Activated CD4-positive, alpha-beta T cell treated with anti-CD3 and anti-CD28 coated beads for 36 hours (primary cell): ENCODE measurements at regions of chr1 and their contacts with region 1.

Region 1: DNA sequence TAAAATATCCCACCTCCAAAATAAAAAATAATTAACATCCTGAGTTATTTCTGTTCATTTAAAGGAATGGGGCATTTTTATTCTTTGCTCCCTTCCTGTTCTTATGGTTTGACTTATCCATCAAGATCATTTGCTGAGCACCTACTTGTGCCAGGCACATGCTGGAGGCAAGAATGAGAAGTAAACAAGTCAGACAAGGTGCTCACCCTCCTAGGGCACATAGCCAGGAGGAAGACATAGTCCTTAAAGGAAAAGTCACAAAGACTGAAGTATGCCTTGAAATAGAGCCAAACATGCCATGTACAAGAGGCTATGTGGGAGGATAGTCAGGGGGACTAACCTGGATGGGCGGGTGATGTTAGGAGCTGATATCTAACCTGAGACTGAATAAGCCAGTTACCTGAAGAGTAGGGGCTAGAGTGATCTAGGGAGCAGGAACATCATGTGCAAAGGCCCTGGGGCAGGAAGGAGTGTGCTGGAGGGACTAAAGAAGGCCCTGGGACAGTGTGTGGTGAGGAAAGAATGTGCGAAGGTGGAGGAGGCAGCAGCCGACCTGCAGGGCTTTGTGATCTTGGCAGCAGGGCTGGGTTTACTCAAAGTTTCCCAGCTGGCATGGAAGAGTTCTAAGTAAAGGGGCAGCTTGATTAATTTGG is 233.5 kb downstream of the MATN1 start:
- DNase-seq: no peak
- ATAC-seq: no peak
- H3K4me3 Mint-ChIP-seq: no peak overlapping the region
- H3K27ac Mint-ChIP-seq: no peak overlapping the region
- H3K4me1 Mint-ChIP-seq: no peaks in the 10 kb centered on the region
- H3K27me3 Mint-ChIP-seq: peaks cover 7% of the 10 kb centered on the region

Region 2: GRCh38 chr1:30099587-30100523 is 390.0 kb before region 1 on chr1:
- CTCF ChIA-PET with region 1: no interaction called
- POLR2A ChIA-PET with region 1: no interaction called
- intact Hi-C with region 1: loop called in 1 of 2 experiments (anchors 5 kb)
- DNase-seq: no peak
- ATAC-seq: no peak
- H3K4me3 Mint-ChIP-seq: no peak overlapping the region
- H3K27ac Mint-ChIP-seq: no peak overlapping the region
- H3K4me1 Mint-ChIP-seq: no peaks in the 10 kb centered on the region
- H3K27me3 Mint-ChIP-seq: peaks cover 3% of the 10 kb centered on the region

Region 3: DNA sequence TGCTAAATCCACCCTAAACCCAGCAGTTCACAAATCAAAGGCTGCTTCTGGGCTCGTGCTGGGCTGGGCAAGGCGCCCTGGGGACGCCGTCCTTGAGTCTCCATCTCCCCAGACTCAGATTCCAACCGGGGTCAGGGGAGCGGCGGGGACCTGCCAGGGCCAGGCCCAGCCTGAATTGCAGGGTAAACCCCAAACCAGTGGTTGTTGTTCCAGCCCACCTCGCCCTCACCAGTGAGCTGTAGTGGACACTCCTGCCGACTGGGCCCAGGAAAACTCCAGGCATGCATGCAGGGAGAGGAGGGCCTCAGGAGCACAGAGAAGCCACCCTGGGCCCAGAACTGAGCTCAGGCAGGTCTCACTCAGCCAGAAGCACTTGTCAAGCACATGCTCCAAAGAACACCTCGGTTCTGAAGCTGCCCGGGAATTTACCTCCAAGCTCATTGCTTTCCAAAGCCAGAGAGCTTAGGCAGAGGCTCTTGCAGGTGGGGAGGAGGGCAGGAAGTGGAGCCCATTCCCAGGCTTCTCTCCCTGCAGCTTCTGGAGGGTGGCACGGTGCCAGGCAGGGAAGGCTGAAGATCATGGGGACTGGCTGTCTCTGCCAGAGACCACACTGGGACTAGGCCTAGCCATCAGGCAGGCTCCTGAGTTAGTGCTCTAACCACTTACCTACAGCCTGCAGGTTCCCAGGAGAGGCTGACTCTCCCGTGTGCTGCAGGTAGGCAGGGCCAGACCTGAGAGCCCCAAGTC is 203.4 kb before region 1 on chr1:
- CTCF ChIA-PET with region 1: no interaction called
- POLR2A ChIA-PET with region 1: no interaction called
- intact Hi-C with region 1: no loop called
- DNase-seq: no peak
- ATAC-seq: no peak
- H3K4me3 Mint-ChIP-seq: no peak overlapping the region
- H3K27ac Mint-ChIP-seq: no peak overlapping the region
- H3K4me1 Mint-ChIP-seq: peaks cover 8% of the 10 kb centered on the region
- H3K27me3 Mint-ChIP-seq: peaks cover 10% of the 10 kb centered on the region

Region 4: GRCh38 chr1:30329802-30330557 is 159.9 kb before region 1 on chr1:
- CTCF ChIA-PET with region 1: no interaction called
- POLR2A ChIA-PET with region 1: no interaction called
- intact Hi-C with region 1: no loop called
- DNase-seq: no peak
- ATAC-seq: no peak
- H3K4me3 Mint-ChIP-seq: no peak overlapping the region
- H3K27ac Mint-ChIP-seq: no peak overlapping the region
- H3K4me1 Mint-ChIP-seq: no peaks in the 10 kb centered on the region
- H3K27me3 Mint-ChIP-seq: peaks cover 1% of the 10 kb centered on the region

Region 5: GRCh38 chr1:30505853-30506252 is 16.0 kb after region 1 on chr1:
- CTCF ChIA-PET with region 1: no interaction called
- POLR2A ChIA-PET with region 1: no interaction called
- intact Hi-C with region 1: no loop called
- DNase-seq: no peak
- ATAC-seq: no peak
- H3K4me3 Mint-ChIP-seq: no peak overlapping the region
- H3K27ac Mint-ChIP-seq: no peak overlapping the region
- H3K4me1 Mint-ChIP-seq: no peaks in the 10 kb centered on the region
- H3K27me3 Mint-ChIP-seq: peaks cover 9% of the 10 kb centered on the region

Region 6: GRCh38 chr1:30611741-30612309 is 122.0 kb after region 1 on chr1:
- CTCF ChIA-PET with region 1: no interaction called
- POLR2A ChIA-PET with region 1: no interaction called
- intact Hi-C with region 1: no loop called
- DNase-seq: peak; percentile 7
- ATAC-seq: no peak
- H3K4me3 Mint-ChIP-seq: no peak overlapping the region
- H3K27ac Mint-ChIP-seq: no peak overlapping the region
- H3K4me1 Mint-ChIP-seq: no peaks in the 10 kb centered on the region
- H3K27me3 Mint-ChIP-seq: peaks cover 6% of the 10 kb centered on the region